ENCODE measurements at regions of chr2 and their contacts with region 1.

Region 1: DNA sequence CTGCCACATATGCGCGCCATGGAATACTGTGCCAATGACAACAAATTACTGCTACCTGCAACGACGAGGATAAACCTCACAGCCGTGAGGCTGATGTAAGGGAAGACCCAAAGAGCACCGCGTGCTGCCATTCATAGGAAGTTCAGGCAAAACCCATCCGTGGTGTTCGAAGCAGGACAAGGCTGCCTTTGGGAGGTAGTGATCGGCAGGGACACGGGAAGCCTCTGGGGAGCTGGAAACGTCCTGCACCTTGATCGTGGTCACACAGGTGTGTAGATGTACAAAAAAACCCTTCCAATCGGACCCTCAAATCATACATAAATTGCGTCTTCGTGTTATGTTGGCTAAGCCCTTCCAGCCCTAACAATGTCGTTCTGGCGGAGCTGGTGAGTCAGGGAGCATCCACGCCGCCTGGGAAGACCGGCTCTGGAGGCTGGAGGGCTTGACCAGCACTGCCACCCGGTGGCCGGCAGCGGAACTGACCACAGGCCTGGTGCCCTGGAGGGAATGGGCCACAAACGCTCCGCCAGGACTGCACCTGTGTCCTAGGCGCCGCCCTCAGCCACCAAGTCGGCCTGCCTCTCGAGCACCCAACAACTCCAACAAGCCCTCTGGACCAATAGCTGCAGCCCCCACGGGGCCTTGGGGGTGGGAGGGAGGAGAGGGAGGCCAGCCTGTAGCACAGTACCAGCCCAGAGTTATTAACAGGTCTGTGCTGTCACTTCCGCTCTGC is 4.1 kb upstream of the NEURL3 start:
- DNase-seq: peak; percentile 86
- CTCF ChIP-seq: peak; percentile 98

Region 2: GRCh38 chr2:96413323-96413722 is 96.0 kb before region 1 on chr2:
- CTCF ChIA-PET with region 1: interaction called, 269 read pairs
- POLR2A ChIA-PET with region 1: no interaction called
- DNase-seq: no peak
- CTCF ChIP-seq: no peak

Region 3: DNA sequence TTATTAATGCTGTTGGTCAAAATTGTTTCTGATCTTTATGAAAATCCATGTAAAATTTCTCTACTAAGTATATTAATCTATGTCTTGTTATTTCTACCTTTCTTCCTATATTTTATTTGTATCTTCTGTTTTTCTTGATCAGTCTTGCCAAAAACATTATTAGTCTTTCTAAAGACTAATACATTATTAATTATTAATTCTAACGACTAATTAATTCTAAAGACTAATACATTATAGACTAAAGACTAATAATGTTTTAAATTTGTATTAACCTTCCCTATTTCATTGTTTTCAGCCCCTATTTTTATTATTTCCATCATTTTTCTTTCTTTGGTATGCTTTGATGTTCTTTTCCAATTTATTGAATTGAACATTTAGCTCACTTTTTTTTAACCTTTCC is 31.8 kb before region 1 on chr2:
- CTCF ChIA-PET with region 1: interaction called, 16 read pairs
- POLR2A ChIA-PET with region 1: no interaction called
- DNase-seq: no peak
- CTCF ChIP-seq: no peak

Region 4: GRCh38 chr2:96498023-96498431 is 11.3 kb before region 1 on chr2:
- CTCF ChIA-PET with region 1: interaction called, 103 read pairs
- POLR2A ChIA-PET with region 1: no interaction called
- DNase-seq: no peak
- CTCF ChIP-seq: no peak

Region 5: GRCh38 chr2:96554293-96555145 is 45.2 kb after region 1 on chr2:
- CTCF ChIA-PET with region 1: interaction called, 38 read pairs
- POLR2A ChIA-PET with region 1: no interaction called
- DNase-seq: peak; percentile 87
- CTCF ChIP-seq: peak; percentile 87